ENCODE measurements at regions of chr5 and their contacts with region 1.

Region 1: GRCh38 chr5:136080483-136081216 is 51.9 kb downstream of the TGFBI start:
- DNase-seq: peak; percentile 94
- ATAC-seq: peak; percentile 95
- H3K4me3 ChIP-seq: peak overlapping the region; percentile 42
- H3K27ac ChIP-seq: peak overlapping the region; percentile 36
- H3K4me1 ChIP-seq: no peaks in the 10 kb centered on the region
- H3K27me3 ChIP-seq: peaks cover 3% of the 10 kb centered on the region; the same call in 1 of the 2 replicates
- CTCF ChIP-seq: no peak
- POLR2A ChIP-seq: peak; percentile 82
- RAD21 ChIP-seq: no peak

Region 2: GRCh38 chr5:135944967-135945560 is 135.6 kb before region 1 on chr5:
- CTCF ChIA-PET with region 1: interaction called, 5 read pairs
- POLR2A ChIA-PET with region 1: no interaction called
- dilution Hi-C with region 1: no loop called
- in situ Hi-C with region 1: no loop called
- intact Hi-C with region 1: loop called (anchors 1 kb)
- DNase-seq: peak; percentile 89
- ATAC-seq: peak; percentile 82
- H3K4me3 ChIP-seq: no peak overlapping the region
- H3K27ac ChIP-seq: no peak overlapping the region
- H3K4me1 ChIP-seq: no peaks in the 10 kb centered on the region
- H3K27me3 ChIP-seq: no peaks in the 10 kb centered on the region; the same call in 1 of the 2 replicates
- CTCF ChIP-seq: peak; percentile 87
- POLR2A ChIP-seq: no peak
- RAD21 ChIP-seq: peak; percentile 92

Region 3: DNA sequence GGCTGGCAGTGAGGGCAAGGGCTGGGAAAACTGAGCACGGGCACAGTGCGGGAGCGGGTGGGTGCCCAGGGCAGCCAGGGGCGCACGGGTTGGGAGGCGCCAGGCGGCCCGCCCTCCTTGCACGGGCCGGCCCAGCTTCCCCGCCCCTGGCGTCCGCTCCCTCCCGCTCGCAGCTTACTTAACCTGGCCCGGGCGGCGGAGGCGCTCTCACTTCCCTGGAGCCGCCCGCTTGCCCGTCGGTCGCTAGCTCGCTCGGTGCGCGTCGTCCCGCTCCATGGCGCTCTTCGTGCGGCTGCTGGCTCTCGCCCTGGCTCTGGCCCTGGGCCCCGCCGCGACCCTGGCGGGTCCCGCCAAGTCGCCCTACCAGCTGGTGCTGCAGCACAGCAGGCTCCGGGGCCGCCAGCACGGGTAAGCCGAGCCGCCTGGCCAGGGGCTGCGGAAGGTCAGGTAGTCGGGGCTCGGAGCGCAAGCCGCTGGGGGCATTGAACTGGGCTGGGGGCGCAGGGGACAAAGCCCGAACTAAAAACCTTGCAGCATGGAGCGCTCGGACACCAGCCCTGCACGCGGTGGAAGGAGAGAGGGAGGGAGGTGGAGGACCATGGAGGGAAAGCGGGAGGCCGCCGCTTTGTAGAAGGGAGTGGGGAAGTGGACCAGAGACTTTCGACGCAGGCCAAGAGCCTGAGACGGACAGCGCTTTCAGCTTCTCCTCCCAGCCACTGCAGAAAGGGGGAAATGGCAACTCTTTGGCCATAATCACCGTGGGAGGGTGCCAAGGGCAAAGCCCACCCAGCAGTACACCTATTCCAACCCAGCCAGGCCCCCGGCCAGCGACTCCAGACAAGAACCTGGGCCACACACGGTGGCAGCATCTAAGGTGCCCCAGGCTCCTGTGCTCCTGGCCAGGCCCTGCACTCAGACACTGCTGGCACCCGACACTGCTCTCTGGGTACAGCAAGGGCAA is 51.6 kb before region 1 on chr5 and contains the start of gene TGFBI:
- CTCF ChIA-PET with region 1: no interaction called
- POLR2A ChIA-PET with region 1: no interaction called
- dilution Hi-C with region 1: no loop called
- in situ Hi-C with region 1: no loop called
- intact Hi-C with region 1: loop called (anchors 1 kb)
- DNase-seq: peak; percentile 67
- ATAC-seq: peak; percentile 90
- H3K4me3 ChIP-seq: peak within 1 kb of the TSS; percentile 92
- H3K27ac ChIP-seq: peak within 1 kb of the TSS; percentile 89
- H3K4me1 ChIP-seq: peaks cover 28% of the 10 kb centered on the region
- H3K27me3 ChIP-seq: no peaks in the 10 kb centered on the region
- CTCF ChIP-seq: peak; percentile 17; the same call in 1 of the 2 replicates
- POLR2A ChIP-seq: peak; percentile 96
- RAD21 ChIP-seq: no peak; the same call in 1 of the 2 replicates
- total RNA-seq, gene TGFBI: 483 and 618 TPM in 2 replicates

Region 4: DNA sequence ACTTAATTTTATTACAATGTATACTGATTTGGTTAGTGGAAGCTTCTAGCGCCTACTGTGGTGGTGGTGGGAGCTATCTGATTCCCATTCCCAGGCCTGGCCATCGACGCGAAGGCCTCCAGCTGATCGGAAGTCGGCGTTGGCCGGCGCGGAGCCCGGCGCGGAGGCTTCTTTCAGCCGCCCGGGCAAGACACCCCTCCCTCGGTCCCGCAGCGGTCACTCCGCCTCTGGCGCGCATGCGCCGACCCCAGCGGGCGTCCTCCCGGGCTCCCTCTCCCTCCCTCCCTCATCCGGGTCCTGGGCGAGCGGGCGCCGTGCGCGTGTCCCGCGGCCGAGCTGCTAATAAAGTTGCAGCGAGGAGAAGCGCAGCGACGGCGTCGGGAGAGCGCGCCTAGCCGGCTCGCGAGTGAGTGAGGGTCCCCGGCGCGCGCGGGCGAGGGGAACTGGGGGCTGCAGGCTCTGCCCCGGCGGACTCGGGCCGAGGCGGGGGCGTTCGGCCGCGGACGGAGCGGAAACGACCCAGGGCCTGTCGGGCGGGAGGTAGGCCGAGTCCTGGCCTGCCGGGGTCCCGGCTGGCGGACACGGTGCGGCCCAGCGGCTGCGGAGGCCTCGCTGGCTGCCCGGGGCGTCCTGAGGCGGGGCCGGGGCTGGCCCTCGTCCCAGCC is 52.0 kb after region 1 on chr5 and contains the start of gene SMAD5:
- CTCF ChIA-PET with region 1: no interaction called
- POLR2A ChIA-PET with region 1: no interaction called
- dilution Hi-C with region 1: no loop called
- in situ Hi-C with region 1: no loop called
- intact Hi-C with region 1: loop called (anchors 2 kb)
- DNase-seq: peak; percentile 95
- ATAC-seq: peak; percentile 94
- H3K4me3 ChIP-seq: peak within 1 kb of the TSS; percentile 81
- H3K27ac ChIP-seq: peak within 1 kb of the TSS; percentile 76
- H3K4me1 ChIP-seq: peaks cover 2% of the 10 kb centered on the region
- H3K27me3 ChIP-seq: peaks cover 5% of the 10 kb centered on the region
- CTCF ChIP-seq: 0 out of 2 replicates have a peak, but pooled peaks have one; percentile 5
- POLR2A ChIP-seq: no peak; the same call in none of the 2 replicates
- RAD21 ChIP-seq: no peak
- total RNA-seq, gene SMAD5: 73.3 and 101 TPM in 2 replicates

Region 5: DNA sequence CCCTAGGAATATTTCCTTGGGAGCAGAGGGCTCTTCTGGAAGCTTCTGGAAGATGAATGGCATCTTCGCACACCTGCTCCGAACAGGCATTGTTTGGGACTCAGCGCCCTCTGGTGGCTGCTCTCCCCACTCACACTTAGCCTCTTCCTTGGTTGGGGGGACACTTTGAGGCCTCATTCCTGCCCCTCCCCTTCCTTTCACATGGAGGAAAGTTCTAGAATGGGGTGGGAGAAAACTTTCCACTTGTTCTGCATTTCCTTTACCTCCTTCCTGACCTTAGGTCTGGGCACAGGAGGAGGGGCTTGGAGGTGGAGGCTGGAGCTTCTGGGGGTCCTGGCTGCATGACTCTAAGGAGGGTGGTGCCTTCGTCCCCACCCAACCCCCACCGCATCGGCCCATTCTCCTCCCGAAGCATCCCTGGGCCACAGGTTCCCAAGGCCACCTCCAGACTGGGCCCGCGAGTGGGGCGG is 131.6 kb after region 1 on chr5:
- CTCF ChIA-PET with region 1: no interaction called
- POLR2A ChIA-PET with region 1: no interaction called
- dilution Hi-C with region 1: no loop called
- in situ Hi-C with region 1: no loop called
- intact Hi-C with region 1: loop called (anchors 1 kb)
- DNase-seq: peak; percentile 48
- ATAC-seq: peak; percentile 74
- H3K4me3 ChIP-seq: no peak overlapping the region
- H3K27ac ChIP-seq: no peak overlapping the region
- H3K4me1 ChIP-seq: no peaks in the 10 kb centered on the region
- H3K27me3 ChIP-seq: peaks cover 32% of the 10 kb centered on the region
- CTCF ChIP-seq: peak; percentile 76
- POLR2A ChIP-seq: no peak
- RAD21 ChIP-seq: peak; percentile 76